Heart right ventricle (tissue), 16 donors: ENCODE measurements at regions of chr15 and their contacts with region 1.

Region 1: DNA sequence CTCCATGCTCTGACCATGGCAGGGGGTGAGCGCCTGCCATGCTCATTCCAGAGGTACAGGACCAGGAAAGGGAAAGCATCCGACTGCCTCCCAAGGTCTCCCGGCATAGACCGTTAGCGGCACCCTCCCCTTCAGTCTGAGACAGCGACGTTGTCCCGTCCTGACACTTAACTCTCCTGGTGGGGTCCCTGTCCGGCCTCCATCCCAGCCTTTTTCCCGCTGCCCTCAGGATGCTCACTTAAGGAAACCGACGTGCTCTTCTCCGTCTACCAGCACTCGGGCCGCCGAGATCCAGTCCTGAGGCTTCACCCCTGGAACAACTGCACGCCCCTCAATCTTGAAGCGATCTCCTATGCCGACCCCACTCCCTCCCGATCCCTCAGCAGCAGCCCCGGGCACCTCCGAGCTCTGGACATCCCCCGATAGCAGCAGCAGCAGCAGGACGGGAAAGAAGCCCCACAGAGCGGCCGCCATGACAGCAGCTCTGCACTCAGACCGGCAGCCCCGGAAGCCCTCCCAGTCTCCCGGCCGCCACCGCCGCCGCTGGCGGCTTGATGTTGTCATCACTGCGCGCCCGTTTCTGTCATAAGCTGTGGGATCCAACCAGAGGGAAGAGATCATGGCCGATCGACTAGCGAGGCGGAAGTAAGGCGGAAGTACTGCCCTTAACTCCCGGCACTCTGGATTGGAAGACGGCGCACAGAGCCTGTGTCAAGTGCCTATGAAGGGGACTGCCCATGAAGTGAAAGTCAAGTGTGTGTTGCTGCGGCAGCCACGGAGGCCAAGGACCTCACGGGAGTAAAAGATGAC is at the starts of genes EMC7 and PGBD4:
- DNase-seq: peak; percentile 98 to 99
- ATAC-seq: peak; percentile 99 to 100 (median 100)
- H3K4me3 ChIP-seq: peak within 1 kb of the TSS; percentile 63 to 98 (median 86)
- H3K27ac ChIP-seq: peak within 1 kb of the TSS; percentile 62 to 93 (median 84)
- H3K4me1 ChIP-seq: peaks cover 3 to 43% (median 31%) of the 10 kb centered on the region in 9 donors
- H3K27me3 ChIP-seq: no peaks in the 10 kb centered on the region
- CTCF ChIP-seq: no peak
- total RNA-seq, gene EMC7: 49.9 to 110 (median 61.4) TPM
- total RNA-seq, gene PGBD4: 1.2 to 2.5 (median 1.9) TPM

Region 2: DNA sequence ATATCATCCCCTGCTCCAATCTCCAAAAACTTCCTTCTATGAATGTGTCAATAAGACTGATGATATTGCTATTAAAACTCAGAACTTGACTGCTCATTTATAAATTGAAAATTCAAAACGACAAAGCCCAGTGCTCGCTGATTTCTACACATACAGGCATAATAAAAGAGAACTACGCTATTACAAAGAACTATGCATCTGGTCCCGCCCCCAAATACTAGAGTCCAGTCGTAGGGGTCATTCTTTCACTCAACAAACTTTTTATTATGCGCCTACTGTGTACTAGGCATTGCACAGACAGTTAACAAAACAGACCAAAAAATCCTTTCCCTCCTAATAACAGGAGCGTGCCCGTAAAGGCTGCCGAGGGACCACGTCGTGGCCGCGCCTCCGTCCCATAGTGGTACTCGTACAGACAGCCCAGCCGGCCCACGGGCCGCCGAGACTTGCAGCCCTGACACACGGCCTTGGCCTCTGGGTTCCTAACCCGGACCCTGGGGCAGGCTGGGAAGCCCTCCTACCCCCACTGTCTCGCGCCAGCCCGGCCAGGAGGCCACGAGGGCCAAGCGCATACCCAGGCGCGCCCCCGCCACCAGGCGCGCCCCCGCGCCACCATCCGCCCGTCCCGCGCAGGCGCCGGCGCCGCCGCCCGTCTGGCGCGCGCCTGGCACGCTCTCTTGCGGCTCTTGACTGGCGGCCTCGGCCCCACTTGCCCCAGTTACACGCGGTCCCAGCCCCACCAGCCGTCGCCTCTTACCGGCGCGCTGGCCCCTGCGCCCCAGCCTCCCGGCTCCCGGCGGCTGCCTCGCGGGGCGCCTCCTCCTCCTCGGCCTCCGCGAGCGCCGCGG is 63.3 kb before region 1 on chr15:
- intact Hi-C with region 1: loop called in 1 of 10 experiments (anchors 10 kb)
- DNase-seq: peak; percentile 63 to 84
- ATAC-seq: peak; percentile 92 to 96 (median 94)
- H3K4me3 ChIP-seq: peak overlapping the region; percentile 45 to 95 (median 86)
- H3K27ac ChIP-seq: peak overlapping the region; percentile 90 to 99 (median 94)
- H3K4me1 ChIP-seq: peaks cover 0 to 32% (median 15%) of the 10 kb centered on the region in 9 donors
- H3K27me3 ChIP-seq: no peaks in the 10 kb centered on the region
- CTCF ChIP-seq: no peak

Region 3: DNA sequence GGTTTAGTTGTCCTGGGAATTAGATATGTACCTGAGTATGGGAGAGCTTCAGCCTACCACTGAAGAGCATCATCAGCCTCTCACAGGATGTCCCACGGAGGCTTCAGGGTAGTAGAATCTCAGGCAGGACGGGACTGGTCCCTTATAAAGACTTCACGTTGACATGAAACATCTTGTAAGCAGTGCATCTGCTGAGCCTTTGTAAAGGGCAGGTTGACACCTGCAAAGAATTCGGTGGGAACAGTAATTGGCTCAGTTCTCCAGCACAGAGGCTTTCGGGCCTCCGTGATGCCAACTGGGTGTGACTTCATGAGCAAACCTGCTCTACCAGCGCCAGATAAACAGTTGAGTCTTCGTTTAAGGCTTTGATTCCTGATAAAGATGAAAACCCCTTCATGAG is 35.6 kb before region 1 on chr15:
- intact Hi-C with region 1: loop called in 1 of 10 experiments (anchors 5 kb)
- DNase-seq: no peak
- ATAC-seq: no peak
- H3K4me3 ChIP-seq: no peak overlapping the region
- H3K27ac ChIP-seq: no peak overlapping the region
- H3K4me1 ChIP-seq: peaks cover 0 to 6% (median 0%) of the 10 kb centered on the region in 9 donors
- H3K27me3 ChIP-seq: no peaks in the 10 kb centered on the region
- CTCF ChIP-seq: no peak

Region 4: DNA sequence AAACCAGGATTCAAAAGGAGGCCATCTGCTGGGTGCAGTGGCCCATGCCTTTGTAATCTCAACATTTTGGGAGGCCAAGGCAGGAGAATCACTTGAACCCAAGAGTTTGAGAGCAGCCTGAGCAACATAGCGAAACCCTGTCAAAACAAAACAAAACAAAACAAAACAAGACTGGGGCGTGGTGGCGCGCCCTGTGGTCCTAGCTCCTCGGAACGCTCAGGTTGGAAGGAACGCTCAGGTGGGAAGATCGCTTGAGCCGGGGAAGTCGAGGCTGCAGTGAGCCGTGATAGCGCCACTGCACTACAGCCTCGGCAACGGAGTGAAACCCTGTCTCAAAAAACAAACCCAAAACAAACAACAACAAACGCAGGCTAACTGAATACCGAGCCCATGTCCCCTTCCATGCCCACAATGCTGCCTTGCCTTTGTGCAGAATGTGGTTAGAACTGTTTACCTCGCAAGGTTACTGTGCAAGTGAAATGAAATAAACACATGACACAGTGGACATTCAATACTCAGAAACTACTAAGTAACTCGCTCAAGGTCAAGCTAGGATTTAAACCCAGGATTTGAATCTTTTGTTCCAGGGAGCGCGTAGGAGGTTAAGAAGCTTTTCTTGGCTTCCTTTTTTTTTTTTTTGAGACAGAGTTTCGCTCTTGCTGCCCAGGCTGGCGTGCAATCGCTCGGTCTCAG is 122.5 kb after region 1 on chr15:
- intact Hi-C with region 1: loop called in 7 of 10 experiments (anchors 1 to 5 kb)
- DNase-seq: peak in 1 of 2 donors; percentile 5
- ATAC-seq: peak in 7 of 8 donors; percentile 4 to 44 (median 17)
- H3K4me3 ChIP-seq: peak overlapping the region; percentile 62 to 94 (median 82)
- H3K27ac ChIP-seq: peak overlapping the region; percentile 76 to 97 (median 94)
- H3K4me1 ChIP-seq: peaks cover 3 to 26% (median 19%) of the 10 kb centered on the region in 9 donors
- H3K27me3 ChIP-seq: no peaks in the 10 kb centered on the region
- CTCF ChIP-seq: no peak